K562 (cell line): ENCODE measurements at regions of chr14 and their contacts with region 1.

Region 1: DNA sequence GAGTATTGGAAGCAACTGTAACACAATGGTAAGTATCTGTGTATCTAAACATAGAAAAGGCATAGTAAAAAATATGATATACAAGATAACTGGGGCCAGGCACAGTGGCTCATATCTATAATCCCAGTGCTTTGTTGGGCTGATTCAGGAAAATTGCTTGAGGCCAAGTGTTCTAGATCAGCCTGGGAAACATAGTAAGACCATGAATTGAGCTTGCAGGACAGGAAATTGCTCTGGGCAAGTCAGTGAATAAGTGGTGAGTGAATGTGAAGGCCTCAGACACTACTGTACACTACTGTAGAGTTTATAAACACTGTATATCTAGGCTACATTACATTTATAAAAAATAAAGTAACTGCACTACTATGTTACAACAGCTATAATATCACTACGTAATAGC is 75.2 kb downstream of the GPR135 start:
- DNase-seq: no peak
- ATAC-seq: no peak
- H3K4me3 ChIP-seq: no peak overlapping the region
- H3K27ac ChIP-seq: no peak overlapping the region
- H3K4me1 ChIP-seq: no peaks in the 10 kb centered on the region
- H3K27me3 ChIP-seq: no peaks in the 10 kb centered on the region
- CTCF ChIP-seq: no peak
- EP300 ChIP-seq: no peak
- POLR2A ChIP-seq: no peak
- RAD21 ChIP-seq: no peak

Region 2: GRCh38 chr14:59098377-59098776 is 291.6 kb before region 1 on chr14:
- CTCF ChIA-PET with region 1: no interaction called
- POLR2A ChIA-PET with region 1: no interaction called
- in situ Hi-C with region 1: no loop called
- intact Hi-C with region 1: no loop called
- DNase-seq: no peak
- ATAC-seq: no peak
- H3K4me3 ChIP-seq: no peak overlapping the region
- H3K27ac ChIP-seq: no peak overlapping the region
- H3K4me1 ChIP-seq: no peaks in the 10 kb centered on the region
- H3K27me3 ChIP-seq: no peaks in the 10 kb centered on the region; a peak in 1 of 5 replicates
- CTCF ChIP-seq: no peak
- EP300 ChIP-seq: no peak
- POLR2A ChIP-seq: no peak
- RAD21 ChIP-seq: no peak

Region 3: DNA sequence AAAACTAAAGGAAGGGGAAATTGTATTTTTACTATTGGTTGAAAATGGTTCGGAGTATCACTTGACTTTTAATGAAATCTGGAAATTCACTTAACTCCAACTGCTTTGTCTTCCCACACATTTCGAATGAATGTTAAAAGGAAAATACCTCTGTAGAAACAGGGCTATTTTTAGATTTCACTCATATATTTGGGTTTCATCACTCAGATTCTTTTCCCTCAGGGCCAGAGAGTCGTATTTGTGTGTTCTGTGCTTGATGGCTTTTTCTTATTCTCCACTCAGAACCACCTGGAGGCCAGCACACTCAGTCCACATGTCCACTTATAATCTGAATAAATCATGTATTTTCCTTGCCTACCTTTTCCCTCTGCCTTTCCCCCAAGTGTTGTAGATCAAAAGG is 161.5 kb before region 1 on chr14:
- CTCF ChIA-PET with region 1: no interaction called
- POLR2A ChIA-PET with region 1: no interaction called
- in situ Hi-C with region 1: no loop called
- intact Hi-C with region 1: no loop called
- DNase-seq: no peak
- ATAC-seq: no peak
- H3K4me3 ChIP-seq: no peak overlapping the region
- H3K27ac ChIP-seq: no peak overlapping the region
- H3K4me1 ChIP-seq: no peaks in the 10 kb centered on the region
- H3K27me3 ChIP-seq: no peaks in the 10 kb centered on the region
- CTCF ChIP-seq: no peak
- EP300 ChIP-seq: no peak
- POLR2A ChIP-seq: no peak
- RAD21 ChIP-seq: no peak

Region 4: GRCh38 chr14:59377991-59378601 is 11.8 kb before region 1 on chr14:
- CTCF ChIA-PET with region 1: no interaction called
- POLR2A ChIA-PET with region 1: no interaction called
- in situ Hi-C with region 1: no loop called
- intact Hi-C with region 1: loop called (anchors 1 kb)
- DNase-seq: no peak
- ATAC-seq: peak; percentile 35; the same call in 2 of the 3 replicates
- H3K4me3 ChIP-seq: no peak overlapping the region
- H3K27ac ChIP-seq: no peak overlapping the region
- H3K4me1 ChIP-seq: no peaks in the 10 kb centered on the region; a peak in 1 of 5 replicates
- H3K27me3 ChIP-seq: no peaks in the 10 kb centered on the region; a peak in 1 of 5 replicates
- CTCF ChIP-seq: no peak
- EP300 ChIP-seq: no peak
- POLR2A ChIP-seq: no peak
- RAD21 ChIP-seq: no peak

Region 5: DNA sequence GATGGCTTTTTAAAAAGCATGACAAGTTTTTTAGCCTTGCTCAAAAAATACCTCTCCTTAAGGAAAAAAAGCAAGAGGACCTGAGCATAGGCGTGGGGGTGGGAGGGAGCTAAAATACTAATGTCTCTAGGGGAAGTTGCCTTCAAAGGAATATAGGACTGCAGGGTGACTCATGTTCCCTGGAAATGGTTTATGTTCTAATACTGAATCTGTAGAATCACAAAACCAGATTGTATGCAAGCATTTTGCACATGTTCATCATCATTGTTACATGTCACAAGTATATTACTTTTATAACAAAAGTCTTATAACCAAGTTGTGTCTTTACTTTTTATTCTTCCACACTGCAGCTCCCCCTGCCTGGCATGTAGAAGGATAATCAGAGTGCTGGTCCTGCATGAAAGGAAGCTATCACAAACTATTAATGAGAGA is 38.7 kb after region 1 on chr14:
- CTCF ChIA-PET with region 1: no interaction called
- POLR2A ChIA-PET with region 1: no interaction called
- in situ Hi-C with region 1: no loop called
- intact Hi-C with region 1: no loop called
- DNase-seq: no peak
- ATAC-seq: no peak
- H3K4me3 ChIP-seq: no peak overlapping the region
- H3K27ac ChIP-seq: no peak overlapping the region
- H3K4me1 ChIP-seq: no peaks in the 10 kb centered on the region
- H3K27me3 ChIP-seq: no peaks in the 10 kb centered on the region; a peak in 1 of 5 replicates
- CTCF ChIP-seq: no peak
- EP300 ChIP-seq: no peak
- POLR2A ChIP-seq: no peak
- RAD21 ChIP-seq: peak in 1 of 2 experiments; percentile 28; a peak in 2 of 4 replicates